ENCODE measurements at regions of chr19 and their contacts with region 1.

Region 1: GRCh38 chr19:49850473-49851342 is at the start of gene PTOV1:
- DNase-seq: peak; percentile 90 to 99 (median 95)

Region 2: GRCh38 chr19:49779731-49780589 is 70.7 kb before region 1 on chr19:
- intact Hi-C with region 1: no loop called
- DNase-seq: no peak

Region 3: GRCh38 chr19:49807922-49808683 is 42.6 kb before region 1 on chr19:
- intact Hi-C with region 1: no loop called
- DNase-seq: no peak

Region 4: GRCh38 chr19:49817964-49818648 is 32.6 kb before region 1 on chr19 and contains the start of gene MED25:
- intact Hi-C with region 1: loop called (anchors 5 kb)
- DNase-seq: peak; percentile 73 to 97 (median 82)

Region 5: DNA sequence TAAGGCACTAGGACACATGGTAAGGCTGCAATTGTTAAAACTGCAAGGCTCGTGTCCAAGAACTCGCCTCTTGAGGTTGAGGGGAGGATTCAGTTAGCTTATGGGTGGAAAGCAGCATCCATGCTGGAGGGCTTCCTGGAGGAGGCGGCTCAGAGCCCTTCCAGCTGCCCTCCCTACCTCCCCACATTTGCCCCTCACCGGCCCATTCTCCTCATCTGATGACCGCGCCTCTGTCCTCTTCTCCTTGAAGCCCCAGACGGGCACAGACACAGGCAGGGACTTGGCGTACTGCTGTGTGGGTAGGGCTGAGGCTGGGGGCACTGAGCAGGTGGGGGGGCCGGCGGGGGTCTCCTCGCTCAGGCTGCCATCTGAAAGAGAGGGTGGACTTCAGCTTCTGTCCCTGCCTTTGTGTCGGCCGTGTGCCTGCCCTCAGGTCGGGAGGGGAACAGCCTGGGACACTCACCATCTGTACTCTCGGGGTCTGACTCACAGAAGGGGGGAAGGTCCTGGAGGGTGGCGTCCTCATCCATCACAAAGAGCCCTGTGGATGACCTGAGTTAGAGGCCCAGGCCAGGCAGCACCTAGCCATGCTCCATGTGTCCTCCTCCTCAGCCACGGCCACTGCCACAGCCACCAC is 20.8 kb after region 1 on chr19:
- intact Hi-C with region 1: no loop called
- DNase-seq: no peak